Activated B cell treated with CpG ODN at 0.5 μM for 24 hours (primary cell): ENCODE measurements at regions of chr9 and their contacts with region 1.

Region 1: GRCh38 chr9:130927995-130928900 is 10.8 kb downstream of the FIBCD1 start:
- DNase-seq: no peak
- ATAC-seq: peak; percentile 72
- H3K4me3 Mint-ChIP-seq: no peak overlapping the region
- H3K27ac Mint-ChIP-seq: peak overlapping the region; percentile 69
- H3K4me1 Mint-ChIP-seq: peaks cover 26% of the 10 kb centered on the region
- H3K27me3 Mint-ChIP-seq: peaks cover 34% of the 10 kb centered on the region
- CTCF ChIP-seq: no peak

Region 2: DNA sequence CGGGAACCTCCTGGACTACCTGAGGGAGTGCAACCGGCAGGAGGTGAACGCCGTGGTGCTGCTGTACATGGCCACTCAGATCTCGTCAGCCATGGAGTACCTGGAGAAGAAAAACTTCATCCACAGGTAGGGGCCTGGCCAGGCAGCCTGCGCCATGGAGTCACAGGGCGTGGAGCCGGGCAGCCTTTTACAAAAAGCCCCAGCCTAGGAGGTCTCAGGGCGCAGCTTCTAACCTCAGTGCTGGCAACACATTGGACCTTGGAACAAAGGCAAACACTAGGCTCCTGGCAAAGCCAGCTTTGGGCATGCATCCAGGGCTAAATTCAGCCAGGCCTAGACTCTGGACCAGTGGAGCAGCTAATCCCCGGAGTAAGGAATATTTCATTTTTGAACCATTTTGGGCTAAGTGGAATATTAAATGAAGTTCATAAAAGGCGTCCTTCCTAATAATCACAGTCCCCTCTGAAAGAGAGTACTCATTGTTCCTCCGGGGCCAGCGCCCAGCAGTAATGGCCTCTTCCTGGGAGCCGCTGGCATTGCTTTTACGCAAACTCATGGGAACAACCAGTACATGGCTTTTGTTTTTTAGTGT is 55.2 kb before region 1 on chr9:
- CTCF ChIA-PET with region 1: no interaction called
- POLR2A ChIA-PET with region 1: no interaction called
- intact Hi-C with region 1: no loop called
- DNase-seq: no peak
- ATAC-seq: no peak
- H3K4me3 Mint-ChIP-seq: no peak overlapping the region
- H3K27ac Mint-ChIP-seq: no peak overlapping the region
- H3K4me1 Mint-ChIP-seq: peaks cover 17% of the 10 kb centered on the region
- H3K27me3 Mint-ChIP-seq: no peaks in the 10 kb centered on the region
- CTCF ChIP-seq: no peak

Region 3: DNA sequence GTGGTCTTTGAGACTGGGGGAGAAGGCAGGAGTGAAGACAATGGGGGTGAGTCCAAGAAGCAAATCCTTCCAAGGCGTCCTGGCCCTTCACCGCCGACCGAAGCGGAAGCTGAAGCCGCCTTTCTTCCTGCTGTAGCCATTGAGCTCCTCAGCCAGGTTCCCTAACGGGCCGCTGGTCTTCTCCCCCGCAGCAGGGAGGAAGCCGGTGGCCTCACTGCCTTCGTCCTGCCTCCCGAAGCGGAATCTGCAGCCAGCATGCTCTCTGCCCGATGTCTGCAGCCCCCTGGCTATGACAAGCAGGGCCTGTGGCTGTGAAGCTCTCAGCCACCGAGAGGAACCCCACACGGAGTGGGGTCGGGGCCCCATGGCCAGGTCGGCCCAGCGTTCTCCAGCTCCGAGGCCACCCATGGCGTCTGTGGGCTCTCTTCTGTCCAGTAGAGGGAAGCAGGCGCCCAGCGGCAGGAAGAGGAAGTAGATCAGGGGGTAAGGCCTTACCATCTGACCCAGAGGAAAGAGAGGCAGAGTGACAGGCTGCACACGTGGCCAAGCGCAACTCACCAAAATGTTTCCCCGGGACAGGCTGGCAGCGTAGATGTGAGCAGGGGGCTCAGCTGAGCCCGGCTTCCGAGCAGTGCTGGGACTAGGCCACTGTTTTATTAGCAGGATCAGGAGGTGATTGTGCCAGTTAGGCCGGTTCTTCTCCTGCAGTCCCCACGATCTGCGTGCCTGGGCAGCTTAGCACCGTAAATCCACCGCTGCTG is 34.7 kb before region 1 on chr9:
- CTCF ChIA-PET with region 1: interaction called, 3 read pairs
- POLR2A ChIA-PET with region 1: no interaction called
- intact Hi-C with region 1: loop called (anchors 5 kb)
- DNase-seq: no peak
- ATAC-seq: peak; percentile 68
- H3K4me3 Mint-ChIP-seq: peak overlapping the region; percentile 44
- H3K27ac Mint-ChIP-seq: no peak overlapping the region
- H3K4me1 Mint-ChIP-seq: peaks cover 11% of the 10 kb centered on the region
- H3K27me3 Mint-ChIP-seq: no peaks in the 10 kb centered on the region
- CTCF ChIP-seq: no peak